ENCODE measurements at regions of chr7 and their contacts with region 1.

Region 1: DNA sequence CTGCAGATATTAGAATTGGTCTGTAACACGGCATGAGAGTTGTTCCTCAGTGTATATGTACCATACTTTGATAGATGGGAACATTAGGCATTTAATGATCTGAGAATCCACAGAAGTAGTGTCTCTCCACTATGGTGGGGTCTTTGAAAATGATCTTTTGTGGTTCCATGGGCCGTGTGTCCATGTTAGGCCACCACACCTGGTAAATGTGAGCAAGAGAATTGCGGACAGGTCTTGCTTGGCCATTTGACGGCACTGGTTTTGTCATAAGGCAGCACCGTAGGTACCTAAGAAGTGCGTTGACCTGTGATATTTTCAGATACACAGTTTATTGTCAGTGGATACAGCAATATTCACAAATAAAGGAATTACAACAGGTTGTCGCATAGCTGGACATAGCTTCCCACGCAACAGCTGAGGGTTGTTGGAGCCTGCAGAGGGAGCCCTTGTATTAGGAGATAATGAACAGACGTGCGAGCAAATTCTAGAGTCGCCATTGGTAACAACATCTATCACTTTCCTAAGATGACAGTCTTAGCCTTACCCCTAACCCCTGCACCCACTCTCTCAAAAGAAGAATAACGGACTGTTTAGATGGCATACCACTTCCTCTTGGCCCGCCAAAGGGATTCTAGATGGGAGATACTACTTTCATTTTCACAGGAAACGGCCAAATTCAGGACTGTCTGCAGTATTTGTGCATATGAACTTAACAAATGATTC is 111.4 kb downstream of the COL28A1 start:
- DNase-seq: peak; percentile 73
- H3K27ac ChIP-seq: no peak overlapping the region
- CTCF ChIP-seq: peak; percentile 92

Region 2: GRCh38 chr7:7103343-7104313 is 320.7 kb before region 1 on chr7:
- CTCF ChIA-PET with region 1: interaction called, 10 read pairs
- POLR2A ChIA-PET with region 1: no interaction called
- DNase-seq: peak; percentile 59
- H3K27ac ChIP-seq: peak overlapping the region; percentile 47
- CTCF ChIP-seq: peak; percentile 65

Region 3: GRCh38 chr7:7539152-7539551 is 114.8 kb after region 1 on chr7:
- CTCF ChIA-PET with region 1: interaction called, 14 read pairs
- POLR2A ChIA-PET with region 1: no interaction called
- DNase-seq: no peak
- H3K27ac ChIP-seq: no peak overlapping the region
- CTCF ChIP-seq: no peak